Activated naive CD4-positive, alpha-beta T cell treated with anti-CD3 and anti-CD28 coated beads for 36 hours (primary cell): ENCODE measurements at regions of chr5 and their contacts with region 1.

Region 1: DNA sequence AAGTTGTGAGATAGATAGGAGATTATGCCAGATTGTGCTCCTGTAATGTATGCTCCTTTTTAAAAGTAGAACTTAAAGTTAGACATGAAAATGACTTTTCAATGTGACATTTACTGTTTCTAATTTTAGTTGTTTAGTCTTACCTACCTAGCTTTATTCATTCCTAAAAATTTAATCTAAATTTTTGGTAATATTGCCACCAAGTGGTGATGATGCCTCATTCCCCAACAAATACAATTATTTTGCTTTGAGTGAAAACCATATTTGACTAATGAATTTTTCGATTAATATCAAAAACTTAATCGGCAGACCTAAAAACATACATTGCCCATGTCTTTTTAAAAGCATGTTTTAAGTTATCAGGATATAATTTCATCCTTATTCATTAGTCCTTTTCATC is 25.6 kb downstream of the PPWD1 start:
- DNase-seq: no peak
- H3K4me3 Mint-ChIP-seq: no peak overlapping the region
- H3K27ac Mint-ChIP-seq: no peak overlapping the region
- H3K4me1 Mint-ChIP-seq: no peaks in the 10 kb centered on the region
- H3K27me3 Mint-ChIP-seq: no peaks in the 10 kb centered on the region

Region 2: GRCh38 chr5:65611524-65611923 is 22.8 kb after region 1 on chr5:
- CTCF ChIA-PET with region 1: no interaction called
- intact Hi-C with region 1: loop called (anchors 2 kb)
- DNase-seq: no peak
- H3K4me3 Mint-ChIP-seq: no peak overlapping the region
- H3K27ac Mint-ChIP-seq: no peak overlapping the region
- H3K4me1 Mint-ChIP-seq: peaks cover 4% of the 10 kb centered on the region
- H3K27me3 Mint-ChIP-seq: no peaks in the 10 kb centered on the region

Region 3: GRCh38 chr5:66002415-66002814 is 413.7 kb after region 1 on chr5:
- CTCF ChIA-PET with region 1: no interaction called
- intact Hi-C with region 1: no loop called
- DNase-seq: no peak
- H3K4me3 Mint-ChIP-seq: no peak overlapping the region
- H3K27ac Mint-ChIP-seq: no peak overlapping the region
- H3K4me1 Mint-ChIP-seq: peaks cover 33% of the 10 kb centered on the region
- H3K27me3 Mint-ChIP-seq: no peaks in the 10 kb centered on the region